ENCODE measurements at regions of chr1 and their contacts with region 1.

Region 1: GRCh38 chr1:156625436-156626078 is 6.3 kb downstream of the HAPLN2 start:
- DNase-seq: peak; percentile 71
- H3K4me3 Mint-ChIP-seq: peak overlapping the region; percentile 55
- H3K27ac Mint-ChIP-seq: peak overlapping the region; percentile 21
- H3K4me1 Mint-ChIP-seq: peaks cover 12% of the 10 kb centered on the region
- H3K27me3 Mint-ChIP-seq: peaks cover 66% of the 10 kb centered on the region

Region 2: DNA sequence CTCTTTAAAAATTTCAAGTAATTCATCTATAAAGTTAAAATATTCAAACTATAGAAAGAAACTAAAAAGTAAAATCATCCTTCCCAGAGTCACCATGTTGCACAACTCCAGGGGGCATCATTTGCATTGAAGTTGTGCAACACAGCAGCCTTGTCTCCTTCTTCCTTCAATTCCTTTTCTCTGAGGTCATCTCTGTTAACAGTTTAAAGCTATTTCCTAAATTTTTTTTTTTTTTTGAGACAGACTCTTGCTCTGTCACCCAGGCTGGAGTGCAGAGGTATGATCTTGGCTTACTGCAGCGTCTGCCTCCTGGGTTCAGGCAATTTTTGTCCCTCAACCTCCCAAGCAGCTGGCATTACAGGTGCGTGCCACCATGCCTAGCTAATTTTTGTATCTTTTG is 249.4 kb before region 1 on chr1:
- CTCF ChIA-PET with region 1: no interaction called
- POLR2A ChIA-PET with region 1: no interaction called
- DNase-seq: no peak
- H3K4me3 Mint-ChIP-seq: no peak overlapping the region
- H3K27ac Mint-ChIP-seq: no peak overlapping the region
- H3K4me1 Mint-ChIP-seq: no peaks in the 10 kb centered on the region
- H3K27me3 Mint-ChIP-seq: peaks cover 29% of the 10 kb centered on the region

Region 3: DNA sequence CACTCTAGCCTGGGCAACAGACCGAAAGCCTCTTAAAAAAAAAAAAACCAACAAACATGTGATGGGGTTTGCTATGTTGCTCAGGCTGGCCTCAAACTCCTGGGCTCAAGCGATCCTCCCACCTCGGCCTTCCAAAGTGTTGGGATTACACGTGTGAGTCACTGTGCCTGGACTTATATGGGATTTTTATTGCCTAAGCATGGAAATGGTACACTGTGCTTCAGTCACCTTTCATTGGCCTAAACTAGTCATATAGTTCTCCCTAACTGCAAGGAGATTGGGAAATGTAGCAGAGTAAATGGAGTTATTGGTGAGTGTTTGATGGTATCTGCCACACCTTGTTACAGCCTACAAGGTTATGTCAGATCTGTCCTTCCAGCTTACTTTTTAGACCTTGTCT is 107.8 kb before region 1 on chr1:
- CTCF ChIA-PET with region 1: no interaction called
- POLR2A ChIA-PET with region 1: no interaction called
- DNase-seq: no peak
- H3K4me3 Mint-ChIP-seq: no peak overlapping the region
- H3K27ac Mint-ChIP-seq: no peak overlapping the region
- H3K4me1 Mint-ChIP-seq: no peaks in the 10 kb centered on the region
- H3K27me3 Mint-ChIP-seq: peaks cover 2% of the 10 kb centered on the region

Region 4: DNA sequence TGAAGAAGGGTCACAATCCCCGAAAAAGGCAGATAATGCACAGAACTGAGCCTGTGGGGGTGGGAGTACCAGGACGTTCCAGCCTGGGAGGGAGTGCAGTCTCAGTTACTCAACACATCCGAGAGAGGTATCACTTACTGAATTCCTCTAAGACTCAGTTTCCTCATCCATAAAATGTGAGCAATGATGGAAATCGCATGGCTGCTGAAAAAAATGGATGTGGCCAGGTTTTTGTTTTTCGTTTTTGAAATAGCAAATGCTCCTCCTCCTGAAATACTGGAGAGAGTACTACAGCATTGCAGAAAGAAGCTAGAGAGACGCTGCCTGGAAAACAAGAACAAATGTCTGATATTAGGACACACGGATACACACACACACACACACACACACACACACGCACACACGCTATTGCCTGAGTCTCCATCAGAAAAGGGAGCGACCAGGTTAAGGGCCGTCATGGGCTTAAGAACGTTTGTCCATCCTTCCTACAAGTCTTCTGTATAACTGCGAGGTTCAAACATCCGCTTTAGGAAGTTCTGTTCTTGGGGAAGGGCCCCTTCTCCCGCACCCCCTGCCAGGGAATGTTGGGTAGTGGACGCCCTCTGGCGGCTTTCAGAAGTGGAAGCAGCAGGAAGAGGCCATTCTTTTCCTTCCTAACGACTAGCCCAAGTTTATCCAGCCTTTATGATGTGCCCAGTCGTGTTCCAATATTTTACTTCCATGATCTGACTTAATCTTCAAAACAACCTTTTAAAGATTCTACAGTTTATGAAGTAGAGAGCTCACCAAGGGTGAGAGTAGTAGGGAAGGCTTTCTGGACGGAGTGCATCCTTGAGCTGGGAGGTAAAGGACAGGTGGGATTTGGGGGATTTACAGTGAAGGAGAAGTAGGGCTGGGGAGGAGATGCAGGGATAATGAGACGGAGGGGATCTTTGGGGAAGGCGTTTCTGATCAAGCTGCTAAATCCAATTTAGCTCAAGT is 52.3 kb after region 1 on chr1:
- CTCF ChIA-PET with region 1: interaction called, 15 read pairs
- POLR2A ChIA-PET with region 1: no interaction called
- DNase-seq: peak; percentile 34
- H3K4me3 Mint-ChIP-seq: no peak overlapping the region
- H3K27ac Mint-ChIP-seq: no peak overlapping the region
- H3K4me1 Mint-ChIP-seq: peaks cover 3% of the 10 kb centered on the region
- H3K27me3 Mint-ChIP-seq: peaks cover 69% of the 10 kb centered on the region

Region 5: DNA sequence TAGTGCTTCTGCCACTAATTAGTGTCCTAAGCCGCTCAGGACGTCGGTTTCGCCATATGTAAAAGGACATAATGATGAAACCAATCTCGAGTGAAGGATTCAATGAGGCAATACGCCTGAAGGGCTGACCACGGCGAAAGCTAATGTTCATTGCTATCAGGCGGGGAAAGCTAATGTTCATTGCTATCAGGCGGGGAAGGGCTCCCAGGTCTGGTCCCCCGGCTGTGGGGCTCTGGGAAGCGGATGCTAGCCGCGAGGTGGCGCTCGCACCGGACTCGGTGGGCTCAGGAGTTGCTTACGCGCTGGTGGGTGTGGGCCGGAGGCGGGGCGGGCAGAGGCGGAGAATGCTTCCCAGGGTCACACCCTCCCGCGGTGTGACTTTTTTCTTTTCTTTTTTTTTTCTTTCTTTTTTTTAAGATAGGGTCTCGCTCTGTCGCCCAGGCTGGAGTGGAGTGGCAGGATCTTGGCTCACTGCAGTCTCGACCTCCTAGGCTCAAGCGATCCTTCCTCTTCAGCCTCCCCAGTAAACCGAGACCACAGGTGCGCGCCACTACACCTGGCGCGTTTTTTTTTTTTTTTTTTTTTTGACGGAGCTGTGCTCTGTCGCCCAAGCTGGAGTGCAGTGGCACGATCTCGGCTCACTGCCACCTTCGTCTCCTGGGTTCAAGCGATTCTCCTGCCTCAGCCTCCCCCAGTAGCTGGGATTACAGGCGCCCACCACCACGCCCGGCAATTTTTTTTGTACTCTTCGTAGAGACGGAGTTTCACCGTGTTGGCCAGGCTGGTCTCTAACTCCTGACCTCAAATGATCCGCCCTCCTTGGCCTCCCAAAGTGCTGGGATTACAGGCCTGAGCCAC is 266.9 kb after region 1 on chr1:
- CTCF ChIA-PET with region 1: no interaction called
- POLR2A ChIA-PET with region 1: no interaction called
- DNase-seq: peak; percentile 87
- H3K4me3 Mint-ChIP-seq: peak overlapping the region; percentile 63
- H3K27ac Mint-ChIP-seq: peak overlapping the region; percentile 65
- H3K4me1 Mint-ChIP-seq: peaks cover 24% of the 10 kb centered on the region
- H3K27me3 Mint-ChIP-seq: peaks cover 50% of the 10 kb centered on the region